ENCODE measurements at regions of chr2 and their contacts with region 1.

Region 1: DNA sequence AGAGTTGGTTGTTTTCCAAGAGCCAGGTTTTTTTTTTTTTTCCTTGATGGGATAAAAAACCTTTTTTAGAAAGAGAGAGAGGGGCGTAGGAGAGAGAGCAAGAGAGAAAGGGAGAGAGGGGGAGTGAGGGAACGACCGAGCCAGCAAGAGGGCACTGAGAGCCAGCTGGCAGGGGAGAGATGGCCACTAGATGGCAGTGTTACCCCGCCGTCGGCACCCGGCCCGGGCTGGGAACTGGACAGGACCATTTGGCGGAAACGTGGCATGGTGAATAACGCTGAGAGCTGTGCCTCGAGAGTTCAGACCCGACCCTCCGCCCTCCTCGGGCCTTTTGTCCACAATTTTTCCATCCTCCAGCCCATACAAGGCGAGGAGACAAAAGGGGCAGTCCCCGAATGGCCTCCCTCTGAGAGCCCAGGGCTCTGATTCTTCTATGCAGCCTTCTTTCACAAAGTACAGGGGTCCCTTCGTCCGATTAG is 286.7 kb upstream of the VRK2 start:
- DNase-seq: peak; percentile 83
- H3K4me3 Mint-ChIP-seq: no peak overlapping the region
- H3K27ac Mint-ChIP-seq: no peak overlapping the region
- H3K4me1 Mint-ChIP-seq: no peaks in the 10 kb centered on the region
- H3K27me3 Mint-ChIP-seq: no peaks in the 10 kb centered on the region

Region 2: DNA sequence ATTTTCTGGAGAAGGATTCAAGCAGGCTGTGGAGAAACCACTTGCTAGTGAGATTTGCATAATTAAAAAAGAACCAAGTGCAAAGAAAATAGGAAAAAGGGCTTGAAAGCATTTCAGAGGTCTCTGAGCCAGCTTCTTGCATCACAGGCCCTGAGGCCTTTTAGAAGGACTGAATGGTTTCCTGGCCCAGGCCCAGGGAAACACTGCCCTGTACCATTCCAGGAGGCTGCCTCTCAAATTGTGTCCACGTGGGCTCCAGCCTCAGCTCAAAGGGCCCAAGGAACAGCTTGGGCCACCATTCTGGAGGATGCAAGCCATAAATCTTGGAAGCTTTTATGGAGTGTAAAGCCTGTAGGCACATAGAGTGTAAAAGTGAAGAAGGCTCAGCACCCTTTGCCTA is 236.6 kb before region 1 on chr2:
- CTCF ChIA-PET with region 1: no interaction called
- POLR2A ChIA-PET with region 1: no interaction called
- intact Hi-C with region 1: no loop called
- DNase-seq: no peak
- H3K4me3 Mint-ChIP-seq: no peak overlapping the region
- H3K27ac Mint-ChIP-seq: no peak overlapping the region
- H3K4me1 Mint-ChIP-seq: no peaks in the 10 kb centered on the region
- H3K27me3 Mint-ChIP-seq: no peaks in the 10 kb centered on the region

Region 3: DNA sequence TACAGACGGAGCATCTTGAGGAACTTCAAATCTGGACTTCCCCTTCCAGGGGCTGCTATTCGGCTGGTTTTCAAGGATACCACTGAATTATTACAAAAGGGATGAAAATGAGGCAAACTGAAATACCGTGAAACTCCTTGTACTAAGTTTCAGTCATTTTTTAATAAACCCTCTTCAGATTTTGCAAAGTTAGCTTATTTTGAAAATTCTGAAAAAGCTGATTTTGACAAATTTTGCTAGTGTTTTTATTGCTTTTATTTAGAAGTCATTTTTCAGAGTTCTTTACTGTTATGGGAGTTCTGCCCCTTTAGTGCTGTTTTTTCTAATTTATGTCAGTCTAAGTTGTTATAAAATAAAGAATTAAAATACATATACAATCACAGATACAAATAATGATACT is 103.7 kb before region 1 on chr2:
- CTCF ChIA-PET with region 1: no interaction called
- POLR2A ChIA-PET with region 1: no interaction called
- intact Hi-C with region 1: no loop called
- DNase-seq: no peak
- H3K4me3 Mint-ChIP-seq: no peak overlapping the region
- H3K27ac Mint-ChIP-seq: no peak overlapping the region
- H3K4me1 Mint-ChIP-seq: no peaks in the 10 kb centered on the region
- H3K27me3 Mint-ChIP-seq: no peaks in the 10 kb centered on the region

Region 4: DNA sequence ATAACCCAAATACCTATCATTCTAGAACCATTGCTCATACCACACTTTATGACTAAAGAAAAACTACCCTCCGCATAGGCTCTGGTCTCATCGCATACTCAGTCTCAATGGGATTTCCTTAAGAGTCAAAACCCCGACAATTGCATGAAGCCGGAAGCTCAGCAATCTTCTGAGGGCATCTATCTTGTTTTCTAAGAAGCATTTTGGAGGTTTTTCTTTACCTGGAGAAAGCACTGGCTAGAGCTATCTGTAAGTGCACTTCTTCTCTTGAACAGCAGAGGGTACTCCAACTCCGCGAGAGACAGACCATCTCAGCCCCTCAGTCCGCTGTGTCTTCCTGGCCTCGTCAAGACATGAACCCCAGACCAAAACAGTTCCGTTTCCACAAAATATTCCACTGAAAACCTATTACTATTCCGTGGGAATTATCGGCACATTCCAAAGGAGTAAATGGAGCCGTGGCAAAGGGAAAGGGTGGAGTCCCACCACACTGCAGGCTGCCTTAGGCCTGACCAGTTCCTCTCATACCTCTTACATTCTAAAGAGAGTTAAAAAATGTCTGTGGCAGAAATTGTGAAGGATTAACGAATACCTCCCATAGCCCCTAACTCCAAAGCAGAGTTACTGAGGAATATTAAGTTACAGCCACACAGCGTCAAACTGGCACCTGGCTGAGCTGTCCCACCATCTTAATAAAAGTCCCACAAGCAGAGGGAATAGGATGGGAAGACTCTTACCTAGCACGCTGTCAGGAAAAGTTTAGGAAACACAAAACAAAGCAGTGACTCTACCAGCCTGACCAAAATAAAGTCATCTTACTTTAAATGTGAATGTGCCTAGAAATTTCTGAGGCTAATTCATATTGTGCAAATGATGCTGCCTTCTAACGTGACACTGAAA is 38.9 kb before region 1 on chr2:
- CTCF ChIA-PET with region 1: interaction called, 5 read pairs
- POLR2A ChIA-PET with region 1: no interaction called
- intact Hi-C with region 1: loop called (anchors 2 kb)
- DNase-seq: peak; percentile 45
- H3K4me3 Mint-ChIP-seq: no peak overlapping the region
- H3K27ac Mint-ChIP-seq: no peak overlapping the region
- H3K4me1 Mint-ChIP-seq: peaks cover 9% of the 10 kb centered on the region
- H3K27me3 Mint-ChIP-seq: peaks cover 8% of the 10 kb centered on the region

Region 5: GRCh38 chr2:57806449-57806968 is 46.6 kb after region 1 on chr2:
- CTCF ChIA-PET with region 1: no interaction called
- POLR2A ChIA-PET with region 1: no interaction called
- intact Hi-C with region 1: no loop called
- DNase-seq: no peak
- H3K4me3 Mint-ChIP-seq: no peak overlapping the region
- H3K27ac Mint-ChIP-seq: no peak overlapping the region
- H3K4me1 Mint-ChIP-seq: no peaks in the 10 kb centered on the region
- H3K27me3 Mint-ChIP-seq: no peaks in the 10 kb centered on the region

Region 6: GRCh38 chr2:58448065-58448507 is 688.2 kb after region 1 on chr2:
- CTCF ChIA-PET with region 1: interaction called, 7 read pairs
- POLR2A ChIA-PET with region 1: no interaction called
- intact Hi-C with region 1: loop called (anchors 1 kb)
- DNase-seq: peak; percentile 50
- H3K4me3 Mint-ChIP-seq: no peak overlapping the region
- H3K27ac Mint-ChIP-seq: no peak overlapping the region
- H3K4me1 Mint-ChIP-seq: no peaks in the 10 kb centered on the region
- H3K27me3 Mint-ChIP-seq: peaks cover 11% of the 10 kb centered on the region